ENCODE measurements at regions of chr11 and their contacts with region 1.

Region 1: GRCh38 chr11:57493507-57494503 is 21.7 kb downstream of the SLC43A1 start:
- DNase-seq: peak; percentile 57 to 85 (median 76)
- ATAC-seq: peak; percentile 97
- H3K4me3 ChIP-seq: no peak overlapping the region
- H3K4me3 Mint-ChIP-seq: no peak overlapping the region
- H3K27ac ChIP-seq: no peak overlapping the region
- H3K27ac Mint-ChIP-seq: no peak overlapping the region
- H3K4me1 ChIP-seq: no peaks in the 10 kb centered on the region
- H3K4me1 Mint-ChIP-seq: no peaks in the 10 kb centered on the region
- H3K27me3 ChIP-seq: no peaks in the 10 kb centered on the region
- H3K27me3 Mint-ChIP-seq: peaks cover 2% of the 10 kb centered on the region
- CTCF ChIP-seq: peak; percentile 91

Region 2: DNA sequence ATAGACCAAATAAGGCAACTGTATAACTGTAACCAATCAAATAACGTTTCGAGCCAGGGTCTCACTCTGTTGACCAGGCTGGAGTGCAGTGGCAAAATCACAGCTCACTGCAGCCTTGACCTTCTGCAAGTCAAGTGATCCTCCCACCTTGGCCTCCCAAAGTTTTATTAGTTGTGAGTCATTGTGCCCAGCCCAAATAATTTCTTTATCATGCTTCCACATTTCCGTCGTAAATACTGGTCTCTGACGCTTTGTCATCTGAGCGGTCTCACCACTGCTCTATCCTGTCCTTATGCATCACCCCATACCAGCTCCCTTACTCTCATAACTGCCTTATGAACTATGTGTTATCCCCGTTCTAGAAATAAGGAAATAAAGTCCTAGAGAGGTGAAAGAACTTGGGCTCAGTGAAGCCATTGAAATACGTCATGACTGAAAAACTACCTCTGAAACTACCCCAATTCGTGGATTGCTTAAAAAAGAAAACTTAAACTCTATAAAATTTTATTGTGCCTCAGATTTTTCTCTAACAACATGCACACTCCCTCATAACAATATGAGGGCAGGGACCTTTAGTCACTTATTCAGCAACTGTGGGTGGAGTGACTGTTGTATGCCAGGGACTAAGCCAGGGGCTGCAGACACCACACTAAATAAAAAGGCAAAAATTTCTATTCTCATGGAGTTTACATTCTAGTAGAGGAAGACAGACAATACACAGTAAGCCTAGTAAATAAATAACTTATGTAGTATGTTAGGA is 49.3 kb before region 1 on chr11:
- CTCF ChIA-PET with region 1: interaction called, 10 read pairs
- POLR2A ChIA-PET with region 1: no interaction called
- intact Hi-C with region 1: no loop called
- DNase-seq: no peak
- ATAC-seq: no peak
- H3K4me3 ChIP-seq: no peak overlapping the region
- H3K4me3 Mint-ChIP-seq: no peak overlapping the region
- H3K27ac ChIP-seq: no peak overlapping the region
- H3K27ac Mint-ChIP-seq: no peak overlapping the region
- H3K4me1 ChIP-seq: no peaks in the 10 kb centered on the region
- H3K4me1 Mint-ChIP-seq: no peaks in the 10 kb centered on the region
- H3K27me3 ChIP-seq: no peaks in the 10 kb centered on the region
- H3K27me3 Mint-ChIP-seq: peaks cover 12% of the 10 kb centered on the region
- CTCF ChIP-seq: no peak

Region 3: DNA sequence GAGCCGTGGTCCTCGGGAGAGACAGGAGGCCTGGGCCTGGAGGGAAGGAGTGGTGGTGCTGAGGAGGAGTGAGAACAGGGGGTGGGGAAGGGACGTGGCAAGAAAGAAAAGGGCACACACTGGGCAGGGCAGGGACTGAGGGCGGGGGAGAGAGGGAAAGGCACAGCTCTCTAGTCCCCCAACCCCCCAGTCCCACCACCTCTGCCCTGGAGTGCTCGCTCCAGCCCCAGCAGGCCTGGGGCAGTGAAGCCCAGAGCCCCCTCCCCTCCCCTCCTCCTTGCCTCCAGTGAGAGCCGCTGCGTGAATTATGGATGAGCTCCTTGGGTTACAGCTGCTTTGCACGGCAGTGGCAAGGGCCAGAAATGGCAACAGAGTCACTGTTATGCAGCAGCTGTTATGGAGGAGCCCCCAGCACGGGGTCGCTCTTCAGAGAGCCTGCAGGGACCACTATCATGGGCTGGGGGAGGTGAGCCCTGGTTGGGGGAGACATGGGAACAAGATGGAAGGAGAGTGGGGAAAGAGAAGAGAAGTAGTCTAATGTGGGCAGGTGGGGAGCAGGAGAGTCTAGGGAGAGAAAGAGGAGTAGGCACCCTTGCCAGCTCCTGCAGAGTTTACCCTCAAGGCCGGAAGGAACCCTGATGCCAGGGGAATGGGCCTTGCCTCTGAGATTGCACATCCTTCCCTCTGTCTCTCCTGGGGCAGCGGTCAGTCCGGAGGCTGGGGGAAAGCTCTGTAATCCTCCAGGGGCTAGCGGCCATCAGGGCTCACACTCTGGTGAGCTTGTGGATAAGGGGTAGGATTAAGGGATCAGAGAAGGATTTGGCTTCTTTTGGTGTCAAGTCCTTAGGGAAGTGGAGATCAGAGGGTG is 29.9 kb before region 1 on chr11:
- CTCF ChIA-PET with region 1: interaction called, 237 read pairs
- POLR2A ChIA-PET with region 1: no interaction called
- intact Hi-C with region 1: no loop called
- DNase-seq: no peak
- ATAC-seq: no peak
- H3K4me3 ChIP-seq: no peak overlapping the region
- H3K4me3 Mint-ChIP-seq: no peak overlapping the region
- H3K27ac ChIP-seq: no peak overlapping the region
- H3K27ac Mint-ChIP-seq: no peak overlapping the region
- H3K4me1 ChIP-seq: peaks cover 18% of the 10 kb centered on the region
- H3K4me1 Mint-ChIP-seq: peaks cover 13% of the 10 kb centered on the region
- H3K27me3 ChIP-seq: peaks cover 3 to 20% of the 10 kb centered on the region in 2 experiments
- H3K27me3 Mint-ChIP-seq: peaks cover 9% of the 10 kb centered on the region
- CTCF ChIP-seq: no peak

Region 4: GRCh38 chr11:57515332-57516060 is 21.7 kb after region 1 on chr11 and contains the start of gene SLC43A1:
- CTCF ChIA-PET with region 1: interaction called, 755 read pairs
- POLR2A ChIA-PET with region 1: interaction called, 13 read pairs
- intact Hi-C with region 1: loop called in 1 of 2 experiments (anchors 2 kb)
- DNase-seq: peak in 5 of 9 experiments; percentile 13 to 56 (median 35)
- ATAC-seq: peak; percentile 29
- H3K4me3 ChIP-seq: peak within 1 kb of the TSS; percentile 82 to 90
- H3K4me3 Mint-ChIP-seq: peak within 1 kb of the TSS; percentile 98
- H3K27ac ChIP-seq: peak within 1 kb of the TSS; percentile 46 to 48
- H3K27ac Mint-ChIP-seq: peak within 1 kb of the TSS; percentile 82
- H3K4me1 ChIP-seq: peaks cover 27% of the 10 kb centered on the region
- H3K4me1 Mint-ChIP-seq: peaks cover 32% of the 10 kb centered on the region
- H3K27me3 ChIP-seq: no peaks in the 10 kb centered on the region
- H3K27me3 Mint-ChIP-seq: no peaks in the 10 kb centered on the region
- CTCF ChIP-seq: no peak
- total RNA-seq, gene SLC43A1: 4.4 to 7.5 TPM

Region 5: DNA sequence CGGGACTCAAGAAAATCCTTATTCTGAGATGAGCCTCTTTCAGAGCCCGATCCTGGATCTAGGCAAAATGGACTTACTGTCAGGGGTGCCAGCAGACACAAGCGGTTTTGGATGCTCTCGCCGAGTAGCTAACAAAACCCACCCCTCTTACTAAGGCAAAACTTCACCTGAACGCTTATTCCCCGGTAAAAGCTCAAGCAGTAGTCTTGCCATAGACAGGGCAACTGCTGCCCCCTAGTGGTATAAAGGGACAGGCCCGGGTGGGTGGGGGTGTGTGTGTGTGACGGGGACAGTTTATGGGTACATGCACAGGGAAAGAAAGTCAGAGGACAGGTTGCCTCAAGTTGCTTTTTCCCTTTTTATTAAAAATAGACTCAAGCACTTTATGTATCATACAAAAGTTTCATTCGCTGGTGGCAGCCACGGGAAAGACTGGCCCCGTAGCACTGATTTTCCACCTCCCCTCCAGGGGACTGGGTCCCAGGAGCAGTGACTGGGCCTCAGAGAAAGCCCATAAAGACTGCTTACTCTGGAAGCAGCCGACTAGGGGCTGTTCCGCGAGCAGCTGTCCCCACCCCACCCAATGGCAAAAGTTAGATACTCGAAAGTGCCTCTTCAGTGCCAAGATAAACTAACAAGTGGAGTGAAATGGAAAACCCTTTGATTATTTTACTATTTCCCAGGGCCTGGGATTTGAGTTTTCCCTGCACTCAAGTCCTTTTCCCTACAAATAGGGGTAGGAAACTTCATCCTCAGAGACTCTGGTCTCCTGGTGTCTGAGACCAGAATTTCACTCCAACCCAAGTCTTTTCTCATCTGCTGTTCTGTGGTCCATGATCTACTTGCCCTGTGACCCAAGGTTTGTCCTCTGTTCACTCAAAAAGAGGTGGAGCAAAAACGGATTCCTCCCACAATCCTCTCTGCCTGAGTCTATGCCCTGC is 151.2 kb after region 1 on chr11:
- CTCF ChIA-PET with region 1: interaction called, 23 read pairs
- POLR2A ChIA-PET with region 1: no interaction called
- intact Hi-C with region 1: loop called (anchors 1 kb)
- DNase-seq: peak; percentile 74 to 93 (median 85)
- ATAC-seq: peak; percentile 61
- H3K4me3 ChIP-seq: no peak overlapping the region
- H3K4me3 Mint-ChIP-seq: no peak overlapping the region
- H3K27ac ChIP-seq: no peak overlapping the region
- H3K27ac Mint-ChIP-seq: no peak overlapping the region
- H3K4me1 ChIP-seq: peaks cover 15% of the 10 kb centered on the region
- H3K4me1 Mint-ChIP-seq: peaks cover 34% of the 10 kb centered on the region
- H3K27me3 ChIP-seq: peaks cover 0 to 22% of the 10 kb centered on the region in 2 experiments
- H3K27me3 Mint-ChIP-seq: peaks cover 48% of the 10 kb centered on the region
- CTCF ChIP-seq: peak; percentile 78

Region 6: DNA sequence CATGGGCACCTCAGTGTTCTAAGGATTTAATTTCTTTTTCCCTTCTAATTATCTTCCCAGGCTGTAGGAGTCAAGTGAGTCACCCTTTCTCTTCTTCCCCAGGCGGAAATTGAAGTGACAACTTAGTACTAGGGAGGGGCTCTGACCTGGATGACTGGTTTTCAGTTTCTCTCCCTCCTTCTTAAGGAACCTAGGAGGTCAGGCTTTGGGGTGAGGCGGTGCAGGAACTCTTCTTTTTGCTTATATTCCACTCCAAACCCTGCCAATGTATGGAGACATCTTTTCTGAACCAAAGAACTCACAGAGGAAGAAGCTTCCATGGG is 186.7 kb after region 1 on chr11:
- CTCF ChIA-PET with region 1: no interaction called
- POLR2A ChIA-PET with region 1: no interaction called
- intact Hi-C with region 1: no loop called
- DNase-seq: no peak
- ATAC-seq: no peak
- H3K4me3 ChIP-seq: no peak overlapping the region
- H3K4me3 Mint-ChIP-seq: no peak overlapping the region
- H3K27ac ChIP-seq: no peak overlapping the region
- H3K27ac Mint-ChIP-seq: peak overlapping the region; percentile 52
- H3K4me1 ChIP-seq: peaks cover 39% of the 10 kb centered on the region
- H3K4me1 Mint-ChIP-seq: peaks cover 59% of the 10 kb centered on the region
- H3K27me3 ChIP-seq: no peaks in the 10 kb centered on the region
- H3K27me3 Mint-ChIP-seq: no peaks in the 10 kb centered on the region
- CTCF ChIP-seq: no peak

Region 7: DNA sequence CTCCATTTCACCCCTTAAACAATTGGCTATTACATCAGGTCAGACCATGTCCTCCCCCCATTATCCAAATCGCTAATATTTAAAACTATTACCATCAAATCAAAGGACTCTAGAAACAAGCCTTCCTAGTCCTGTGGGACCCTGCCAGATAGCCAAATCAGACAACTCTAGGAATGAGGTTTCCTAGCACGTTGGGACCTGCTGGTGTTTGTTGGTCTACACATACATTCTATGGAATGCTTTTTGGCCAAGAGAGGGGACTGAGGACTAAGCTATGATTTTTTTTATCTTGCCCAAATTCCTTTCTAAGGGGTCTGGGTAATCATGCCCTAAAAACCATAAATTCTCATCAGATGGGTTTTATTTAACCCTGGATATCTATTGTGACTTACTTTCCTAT is 233.4 kb after region 1 on chr11:
- CTCF ChIA-PET with region 1: no interaction called
- POLR2A ChIA-PET with region 1: no interaction called
- intact Hi-C with region 1: no loop called
- DNase-seq: no peak
- ATAC-seq: no peak
- H3K4me3 ChIP-seq: no peak overlapping the region
- H3K4me3 Mint-ChIP-seq: no peak overlapping the region
- H3K27ac ChIP-seq: no peak overlapping the region
- H3K27ac Mint-ChIP-seq: no peak overlapping the region
- H3K4me1 ChIP-seq: no peaks in the 10 kb centered on the region
- H3K4me1 Mint-ChIP-seq: peaks cover 20% of the 10 kb centered on the region
- H3K27me3 ChIP-seq: no peaks in the 10 kb centered on the region
- H3K27me3 Mint-ChIP-seq: no peaks in the 10 kb centered on the region
- CTCF ChIP-seq: no peak

Region 8: DNA sequence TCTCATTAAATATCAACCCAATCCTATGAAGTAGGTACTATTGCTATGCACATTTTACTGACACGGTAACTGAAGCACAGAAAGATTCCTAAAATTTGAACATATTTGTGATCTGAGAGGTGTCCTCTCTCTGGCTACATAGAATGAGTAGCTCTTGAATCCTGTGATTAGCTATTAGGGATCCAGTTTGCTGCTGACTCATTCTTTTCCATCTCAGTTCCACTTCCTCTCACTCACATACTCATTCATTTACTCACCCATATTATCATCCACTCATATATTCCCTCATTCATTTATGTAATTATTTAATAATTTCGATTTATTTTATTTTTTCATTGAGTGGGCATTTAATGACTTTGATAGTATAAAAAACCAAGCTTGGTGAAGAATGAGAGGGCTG is 822.3 kb after region 1 on chr11:
- CTCF ChIA-PET with region 1: no interaction called
- POLR2A ChIA-PET with region 1: no interaction called
- intact Hi-C with region 1: no loop called
- DNase-seq: no peak
- ATAC-seq: no peak
- H3K4me3 ChIP-seq: no peak overlapping the region
- H3K4me3 Mint-ChIP-seq: no peak overlapping the region
- H3K27ac ChIP-seq: no peak overlapping the region
- H3K27ac Mint-ChIP-seq: no peak overlapping the region
- H3K4me1 ChIP-seq: no peaks in the 10 kb centered on the region
- H3K4me1 Mint-ChIP-seq: no peaks in the 10 kb centered on the region
- H3K27me3 ChIP-seq: no peaks in the 10 kb centered on the region
- H3K27me3 Mint-ChIP-seq: peaks cover 8% of the 10 kb centered on the region
- CTCF ChIP-seq: no peak

Region 9: GRCh38 chr11:59025097-59025496 is 1531.3 kb after region 1 on chr11:
- CTCF ChIA-PET with region 1: no interaction called
- POLR2A ChIA-PET with region 1: no interaction called
- intact Hi-C with region 1: no loop called
- DNase-seq: no peak
- ATAC-seq: no peak
- H3K4me3 ChIP-seq: no peak overlapping the region
- H3K4me3 Mint-ChIP-seq: no peak overlapping the region
- H3K27ac ChIP-seq: no peak overlapping the region
- H3K27ac Mint-ChIP-seq: no peak overlapping the region
- H3K4me1 ChIP-seq: no peaks in the 10 kb centered on the region
- H3K4me1 Mint-ChIP-seq: no peaks in the 10 kb centered on the region
- H3K27me3 ChIP-seq: peaks cover 0 to 3% of the 10 kb centered on the region in 2 experiments
- H3K27me3 Mint-ChIP-seq: peaks cover under 1% of the 10 kb centered on the region
- CTCF ChIP-seq: no peak